Activated CD4-positive, alpha-beta T cell treated with anti-CD3 and anti-CD28 coated beads, Interleukin-2, amount 10 ng/mL, durations not matched to agents 24 days and 14 days (primary cell): ENCODE measurements at regions of chr2 and their contacts with region 1.

Region 1: DNA sequence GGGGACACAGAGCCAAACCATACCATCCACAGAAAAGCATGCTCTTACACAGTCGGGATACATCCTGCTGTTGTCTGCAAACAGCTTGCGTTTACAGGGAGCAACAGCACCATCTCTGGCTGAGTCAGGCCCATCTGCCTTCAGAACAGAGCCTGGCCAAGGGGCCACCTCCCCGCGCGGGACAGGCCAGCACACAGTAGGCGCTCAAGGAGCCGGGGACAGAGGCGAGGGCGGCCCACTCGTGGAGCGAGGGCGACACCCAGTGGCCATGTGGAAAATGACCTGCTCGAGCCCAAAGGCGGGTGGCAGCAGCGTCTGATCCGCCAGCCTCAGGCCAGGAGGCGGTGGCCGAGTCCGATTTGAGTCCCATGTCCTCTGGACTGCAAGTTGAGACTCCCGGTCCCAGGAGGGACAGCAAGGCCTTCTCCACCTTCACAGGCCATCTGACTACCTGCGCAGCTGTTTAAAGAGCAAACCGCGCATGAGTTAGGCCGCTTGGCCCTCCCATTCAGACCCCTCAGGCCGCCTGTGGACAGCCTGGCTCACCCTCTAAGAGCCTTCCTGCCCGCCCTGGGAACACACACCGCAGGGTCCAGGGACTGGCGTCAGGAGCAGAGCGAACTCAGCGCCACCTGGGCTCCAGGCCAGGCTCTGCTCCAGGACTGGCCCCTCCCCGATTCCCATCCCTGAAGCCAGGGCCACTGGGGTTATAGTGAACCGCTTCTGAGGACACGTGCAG is 38.3 kb downstream of the TTC32 start:
- DNase-seq: peak; percentile 91
- H3K4me3 Mint-ChIP-seq: no peak overlapping the region
- H3K27ac Mint-ChIP-seq: no peak overlapping the region
- H3K4me1 Mint-ChIP-seq: peaks cover 23% of the 10 kb centered on the region
- H3K27me3 Mint-ChIP-seq: peaks cover 5% of the 10 kb centered on the region

Region 2: DNA sequence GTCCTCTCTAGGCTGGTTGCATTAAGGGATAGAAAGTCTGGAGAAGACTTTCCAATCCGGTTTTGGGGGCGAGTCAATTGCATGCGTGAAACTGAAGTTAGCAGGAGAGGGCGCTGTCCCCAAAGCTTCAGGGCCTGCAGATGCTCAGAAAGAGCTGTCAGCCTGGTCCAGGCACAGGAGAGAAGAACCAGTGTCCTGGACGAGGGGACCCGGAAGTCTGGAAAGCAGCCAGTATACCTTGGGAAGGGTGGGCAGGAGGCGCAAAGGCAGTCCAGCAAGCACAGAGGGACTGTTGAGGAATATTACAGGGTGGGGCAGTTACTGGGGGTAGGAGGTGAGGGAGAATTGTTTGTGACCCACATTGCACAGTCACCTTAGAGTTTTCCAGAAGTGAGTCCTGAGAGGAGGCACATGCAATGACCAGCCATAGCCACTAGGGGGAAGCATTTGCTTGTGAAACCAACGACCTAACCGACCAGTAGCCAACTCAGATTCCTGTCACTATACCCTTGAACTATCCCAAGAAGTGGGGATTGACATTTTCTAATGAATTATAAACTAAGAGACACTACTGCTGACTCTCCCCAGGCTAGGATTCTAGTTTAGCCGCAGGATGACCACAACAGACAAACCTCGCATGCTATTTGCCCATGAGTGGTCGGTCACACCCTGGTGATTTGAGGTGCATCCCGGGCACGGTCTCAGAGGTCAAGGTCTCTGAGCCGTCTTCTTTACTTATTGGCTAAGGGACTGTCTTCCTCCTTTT is 1475.8 kb before region 1 on chr2:
- intact Hi-C with region 1: loop called (anchors 5 kb)
- DNase-seq: peak; percentile 84
- H3K4me3 Mint-ChIP-seq: no peak overlapping the region
- H3K27ac Mint-ChIP-seq: no peak overlapping the region
- H3K4me1 Mint-ChIP-seq: no peaks in the 10 kb centered on the region
- H3K27me3 Mint-ChIP-seq: no peaks in the 10 kb centered on the region

Region 3: GRCh38 chr2:18520451-18521425 is 1342.7 kb before region 1 on chr2:
- intact Hi-C with region 1: loop called (anchors 1 kb)
- DNase-seq: peak; percentile 90
- H3K4me3 Mint-ChIP-seq: no peak overlapping the region
- H3K27ac Mint-ChIP-seq: no peak overlapping the region
- H3K4me1 Mint-ChIP-seq: no peaks in the 10 kb centered on the region
- H3K27me3 Mint-ChIP-seq: peaks cover 9% of the 10 kb centered on the region

Region 4: GRCh38 chr2:18749912-18750526 is 1113.5 kb before region 1 on chr2:
- intact Hi-C with region 1: loop called (anchors 5 kb)
- DNase-seq: peak; percentile 78
- H3K4me3 Mint-ChIP-seq: no peak overlapping the region
- H3K27ac Mint-ChIP-seq: no peak overlapping the region
- H3K4me1 Mint-ChIP-seq: no peaks in the 10 kb centered on the region
- H3K27me3 Mint-ChIP-seq: no peaks in the 10 kb centered on the region

Region 5: GRCh38 chr2:19362755-19363473 is 500.6 kb before region 1 on chr2:
- intact Hi-C with region 1: loop called (anchors 5 kb)
- DNase-seq: peak; percentile 80
- H3K4me3 Mint-ChIP-seq: peak overlapping the region; percentile 94
- H3K27ac Mint-ChIP-seq: peak overlapping the region; percentile 56
- H3K4me1 Mint-ChIP-seq: peaks cover 21% of the 10 kb centered on the region
- H3K27me3 Mint-ChIP-seq: peaks cover 94% of the 10 kb centered on the region

Region 6: GRCh38 chr2:19408592-19408991 is 454.9 kb before region 1 on chr2:
- intact Hi-C with region 1: no loop called
- DNase-seq: no peak
- H3K4me3 Mint-ChIP-seq: no peak overlapping the region
- H3K27ac Mint-ChIP-seq: no peak overlapping the region
- H3K4me1 Mint-ChIP-seq: no peaks in the 10 kb centered on the region
- H3K27me3 Mint-ChIP-seq: peaks cover 5% of the 10 kb centered on the region

Region 7: DNA sequence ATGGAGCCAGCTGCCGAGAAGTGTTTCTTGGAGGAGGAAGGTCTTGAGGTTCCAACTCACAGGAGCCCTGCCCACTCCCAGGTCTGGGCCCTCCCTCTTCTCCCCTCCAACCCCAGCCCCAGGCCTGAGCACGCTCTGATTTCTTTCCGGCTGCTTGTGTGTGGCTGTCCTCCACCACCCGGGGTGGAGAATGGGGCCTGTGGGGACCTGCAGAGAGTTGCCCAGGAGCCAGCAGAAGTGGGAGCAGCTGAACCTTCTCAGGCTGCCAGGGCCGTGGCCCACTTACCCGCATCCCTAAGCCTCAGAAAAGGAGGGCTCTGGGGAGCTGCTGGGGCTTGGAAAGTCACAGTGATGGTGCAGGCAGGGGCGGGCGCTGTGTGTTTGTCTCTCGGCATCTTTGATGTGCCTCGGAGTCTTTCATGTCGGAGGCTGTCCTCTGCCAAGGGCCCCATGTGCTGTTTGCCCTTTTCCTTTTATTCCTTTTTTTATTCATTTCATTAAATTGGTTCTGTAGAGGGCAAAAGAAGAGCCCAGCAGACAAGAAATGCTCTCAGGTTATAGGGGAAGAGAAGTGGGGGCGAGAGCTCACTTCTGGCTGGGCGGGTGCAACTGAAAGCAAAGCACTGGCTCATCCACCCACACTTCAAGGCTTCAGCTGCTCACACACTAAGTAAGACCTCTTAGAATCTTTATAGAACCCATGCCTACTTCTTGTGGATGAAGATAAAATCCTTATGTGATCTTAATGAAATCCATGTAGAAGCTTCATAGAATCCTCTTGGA is 309.0 kb after region 1 on chr2:
- intact Hi-C with region 1: no loop called
- DNase-seq: no peak
- H3K4me3 Mint-ChIP-seq: no peak overlapping the region
- H3K27ac Mint-ChIP-seq: no peak overlapping the region
- H3K4me1 Mint-ChIP-seq: no peaks in the 10 kb centered on the region
- H3K27me3 Mint-ChIP-seq: peaks cover 4% of the 10 kb centered on the region